HAP-1 (cell line): ENCODE measurements at regions of chr13 and their contacts with region 1.

Region 1: GRCh38 chr13:62014299-62014698 is 598.6 kb upstream of the PCDH20 start:
- DNase-seq: peak in 1 of 2 experiments; percentile 55
- H3K4me3 ChIP-seq: no peak overlapping the region
- H3K4me1 ChIP-seq: no peaks in the 10 kb centered on the region
- H3K27me3 ChIP-seq: no peaks in the 10 kb centered on the region

Region 2: DNA sequence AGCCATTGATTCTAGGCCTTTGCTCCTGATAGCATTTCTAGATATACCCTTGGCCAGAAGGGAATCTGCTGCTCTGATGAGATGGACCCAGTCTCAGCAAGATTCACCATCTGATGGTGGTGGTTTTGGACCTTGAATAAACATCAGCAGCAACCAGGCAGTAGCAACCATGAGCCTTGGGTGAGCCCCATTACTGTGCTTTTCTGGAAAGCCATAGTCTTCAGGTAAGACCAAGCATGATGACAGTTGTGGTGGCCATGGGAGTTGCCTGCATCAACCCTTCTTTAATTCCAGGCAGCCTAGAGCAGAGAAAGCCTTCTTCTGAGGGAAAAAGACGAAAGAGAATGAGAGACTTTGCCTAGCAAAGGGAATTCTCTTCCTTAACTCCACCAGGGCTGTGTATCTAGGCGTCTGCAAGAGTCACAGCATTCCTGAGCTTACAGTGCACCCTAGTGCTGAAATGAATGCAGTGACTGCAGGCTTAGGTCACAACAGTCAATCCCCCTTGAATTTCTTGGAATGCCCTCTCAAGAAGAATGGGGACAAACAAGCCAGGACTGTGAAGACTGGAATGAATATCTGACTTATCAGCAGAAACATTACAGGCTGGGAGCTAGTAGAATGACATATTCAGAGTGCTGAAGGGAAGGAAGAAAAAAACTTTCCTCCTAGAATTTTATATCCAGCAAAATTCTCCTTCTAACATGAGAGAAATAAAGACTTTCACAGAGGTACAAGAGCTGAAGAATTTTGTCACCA is 343.8 kb after region 1 on chr13:
- in situ Hi-C with region 1: loop called (anchors 25 kb)
- DNase-seq: peak; percentile 78 to 82
- H3K4me3 ChIP-seq: no peak overlapping the region
- H3K4me1 ChIP-seq: peaks cover 14% of the 10 kb centered on the region
- H3K27me3 ChIP-seq: no peaks in the 10 kb centered on the region